Heart right ventricle (tissue), 16 donors: ENCODE measurements at regions of chr12 and their contacts with region 1.

Region 1: GRCh38 chr12:85448548-85449139 is 168.6 kb downstream of the ALX1 start:
- DNase-seq: no peak
- ATAC-seq: no peak
- H3K4me3 ChIP-seq: no peak overlapping the region
- H3K27ac ChIP-seq: no peak overlapping the region
- H3K4me1 ChIP-seq: no peaks in the 10 kb centered on the region
- H3K27me3 ChIP-seq: peaks cover 0 to 33% (median 0%) of the 10 kb centered on the region in 7 donors
- CTCF ChIP-seq: peak in 7 of 9 donors; percentile 17 to 45 (median 34)

Region 2: DNA sequence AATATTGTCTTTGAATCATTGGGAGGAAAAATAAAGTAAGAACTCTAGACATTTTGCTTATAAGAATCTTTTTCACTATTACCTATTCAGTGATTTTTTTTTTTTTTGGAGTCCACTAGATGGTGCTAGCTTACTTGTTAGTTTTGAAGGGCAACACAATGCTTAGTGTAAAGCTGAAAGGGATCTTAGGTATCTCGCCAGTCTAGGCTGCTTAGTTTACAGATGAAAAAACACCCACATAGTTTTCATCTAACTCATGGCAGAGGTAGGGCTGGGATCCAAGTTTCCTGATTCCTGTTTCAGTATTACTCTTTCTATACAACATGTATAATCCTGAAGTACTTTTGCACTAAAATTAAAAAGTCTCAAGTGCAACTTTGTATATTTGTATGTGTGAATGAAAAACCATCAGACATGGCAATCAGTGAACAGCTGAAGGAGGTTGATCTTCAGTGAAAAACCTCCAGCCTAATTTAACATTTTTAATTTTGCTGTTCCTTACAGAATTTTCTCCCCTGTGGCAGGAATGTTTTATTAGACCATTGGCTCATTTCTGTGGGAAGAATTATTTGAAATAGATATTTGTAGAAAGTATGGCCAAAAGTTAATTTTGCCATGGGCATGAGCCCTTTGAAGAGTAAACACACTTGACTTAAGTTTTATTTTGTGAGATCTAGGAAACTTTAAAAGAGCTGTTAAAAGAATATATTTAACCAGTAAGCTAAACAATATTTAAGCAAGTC is 371.8 kb before region 1 on chr12:
- intact Hi-C with region 1: loop called in 2 of 10 experiments (anchors 10 kb)
- DNase-seq: no peak
- ATAC-seq: peak in 1 of 8 donors; percentile 58
- H3K4me3 ChIP-seq: no peak overlapping the region
- H3K27ac ChIP-seq: no peak overlapping the region
- H3K4me1 ChIP-seq: no peaks in the 10 kb centered on the region
- H3K27me3 ChIP-seq: no peaks in the 10 kb centered on the region
- CTCF ChIP-seq: peak in 6 of 9 donors; percentile 36 to 56 (median 40)

Region 3: DNA sequence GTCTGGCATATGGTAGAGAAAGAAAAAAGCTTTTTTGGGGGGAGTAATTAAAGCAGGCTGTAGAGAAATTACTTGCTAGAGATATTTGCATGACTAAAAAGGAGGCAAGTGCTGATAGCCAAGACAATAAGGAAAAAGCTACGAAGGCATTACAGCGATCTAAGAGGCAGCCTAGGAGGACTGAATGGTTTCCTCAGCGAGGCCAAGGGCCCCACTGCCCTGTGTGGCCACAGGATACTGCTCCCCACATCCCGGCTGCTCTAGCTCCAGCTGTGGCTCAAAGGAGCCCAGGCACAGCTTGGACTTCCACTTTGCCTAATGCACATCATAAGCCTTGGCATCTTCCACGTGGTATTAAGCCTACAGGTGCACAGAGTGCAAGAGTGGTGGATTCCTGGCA is 358.9 kb before region 1 on chr12:
- intact Hi-C with region 1: loop called in 1 of 10 experiments (anchors 10 kb)
- DNase-seq: no peak
- ATAC-seq: no peak
- H3K4me3 ChIP-seq: no peak overlapping the region
- H3K27ac ChIP-seq: no peak overlapping the region
- H3K4me1 ChIP-seq: no peaks in the 10 kb centered on the region
- H3K27me3 ChIP-seq: no peaks in the 10 kb centered on the region
- CTCF ChIP-seq: no peak